ENCODE measurements at regions of chr20 and their contacts with region 1.

Region 1: DNA sequence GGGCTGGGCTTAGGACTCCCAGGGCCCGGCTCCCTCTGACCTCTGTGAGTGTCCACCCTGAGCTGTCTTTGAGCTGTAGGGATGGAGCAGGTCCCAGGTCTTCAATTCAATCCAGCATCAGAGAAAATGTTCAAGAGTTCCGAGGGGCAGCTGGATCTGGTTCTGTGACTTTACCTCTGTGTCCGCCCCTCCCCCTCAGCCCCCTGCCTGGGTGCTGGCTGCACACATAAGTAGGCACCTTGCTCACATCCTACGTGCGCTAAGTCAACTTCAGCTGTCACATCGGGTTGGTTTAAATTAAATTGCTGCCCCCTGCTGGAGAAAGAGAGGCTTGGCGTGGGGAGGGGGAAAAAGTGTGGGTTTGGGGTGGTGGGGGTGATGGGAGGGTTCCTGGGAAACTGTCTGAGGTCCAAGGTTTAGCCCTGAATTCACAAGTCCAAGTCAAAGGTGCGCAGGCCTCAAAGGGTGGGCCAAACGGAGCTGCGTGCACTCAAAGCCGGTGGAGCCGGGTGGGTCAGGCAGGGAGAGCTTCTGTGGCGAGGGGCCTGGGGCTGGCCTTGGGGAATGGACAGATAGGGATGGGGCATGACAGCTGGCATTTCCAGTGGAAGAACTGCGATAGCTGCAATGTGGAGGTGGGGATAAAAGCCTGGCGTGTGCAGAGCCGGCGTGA is 3.0 kb downstream of the WFDC5 start:
- DNase-seq: no peak
- H3K4me3 ChIP-seq: no peak overlapping the region
- CTCF ChIP-seq: peak; percentile 27

Region 2: DNA sequence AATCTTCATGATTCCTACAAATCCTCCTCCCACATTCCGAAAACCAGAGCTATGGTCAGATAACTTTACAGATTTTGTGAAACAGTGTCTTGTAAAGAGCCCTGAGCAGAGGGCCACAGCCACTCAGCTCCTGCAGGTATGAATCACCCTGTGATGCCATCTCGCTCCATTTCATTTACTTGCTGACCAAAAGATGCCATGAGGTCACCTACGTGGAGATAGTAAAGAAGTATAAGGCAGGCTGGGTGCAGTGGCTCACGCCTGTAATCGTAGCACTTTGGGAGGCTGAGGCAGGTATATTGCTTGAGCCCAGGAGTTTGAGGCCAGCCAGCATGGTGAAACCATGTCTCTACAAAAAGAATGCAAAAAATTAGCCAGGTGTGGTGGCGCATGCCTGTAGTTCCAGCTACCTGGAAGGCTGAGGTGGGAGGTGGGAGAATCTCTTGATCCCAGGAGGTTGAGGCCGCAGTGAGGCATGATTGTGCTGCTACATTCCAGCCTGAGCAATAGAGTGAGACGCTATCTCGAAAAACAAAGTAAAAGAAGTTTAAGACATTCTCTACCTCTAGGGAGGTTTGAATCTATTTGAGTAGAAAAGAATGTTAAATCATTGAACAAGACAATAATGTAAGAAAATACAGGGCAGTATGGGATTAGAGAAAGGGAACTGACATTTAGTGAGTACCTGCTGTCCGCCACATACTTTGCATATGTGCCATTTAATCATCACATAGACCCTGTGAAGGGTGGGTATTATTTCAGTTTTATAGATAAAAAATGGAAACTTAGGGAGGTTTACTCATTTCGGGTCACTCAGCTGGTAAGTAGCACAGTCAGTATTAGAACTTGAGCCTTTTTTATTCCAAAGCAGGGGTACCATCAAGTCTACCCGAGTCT is 114.5 kb before region 1 on chr20:
- CTCF ChIA-PET with region 1: no interaction called
- POLR2A ChIA-PET with region 1: no interaction called
- DNase-seq: no peak
- H3K4me3 ChIP-seq: no peak overlapping the region
- CTCF ChIP-seq: no peak

Region 3: DNA sequence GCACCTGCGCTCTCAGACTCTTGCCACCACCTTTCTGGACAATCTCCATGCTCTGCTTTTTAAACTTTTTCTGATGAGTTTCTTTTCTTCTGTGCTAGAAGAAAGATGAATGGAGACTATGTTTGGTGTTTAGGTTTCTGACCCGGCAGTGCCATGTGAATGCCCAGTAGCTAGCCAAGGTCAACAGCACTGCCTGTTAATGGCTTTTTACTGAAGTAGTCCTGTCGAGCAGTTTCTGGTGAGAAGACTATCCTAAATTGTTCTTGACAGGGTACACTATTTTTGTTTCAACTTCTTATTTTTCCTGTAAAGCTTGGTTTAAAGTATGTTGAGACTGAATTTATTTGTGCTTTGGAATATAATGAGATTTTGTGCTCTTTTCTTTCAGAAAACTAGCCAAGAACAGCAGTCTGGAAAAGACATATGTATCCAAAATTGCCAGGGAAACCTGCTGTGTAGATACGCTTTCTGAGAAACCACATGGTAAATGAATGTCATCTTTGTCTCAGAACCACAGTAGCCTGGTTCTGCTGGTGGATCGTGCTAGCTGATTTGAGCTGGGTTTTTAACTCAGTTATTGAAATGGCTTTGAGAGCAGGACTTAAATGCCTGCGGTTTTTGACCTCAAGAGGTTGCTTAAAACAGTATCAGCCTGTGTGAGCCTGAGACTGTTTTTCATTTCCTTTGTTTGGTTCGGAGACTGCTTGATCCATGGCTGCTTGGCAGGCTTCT is 59.1 kb before region 1 on chr20:
- CTCF ChIA-PET with region 1: interaction called, 16 read pairs
- POLR2A ChIA-PET with region 1: no interaction called
- DNase-seq: peak; percentile 57
- H3K4me3 ChIP-seq: no peak overlapping the region
- CTCF ChIP-seq: no peak

Region 4: GRCh38 chr20:45329510-45330319 is 217.8 kb after region 1 on chr20:
- CTCF ChIA-PET with region 1: no interaction called
- POLR2A ChIA-PET with region 1: no interaction called
- DNase-seq: no peak
- H3K4me3 ChIP-seq: no peak overlapping the region
- CTCF ChIP-seq: no peak

Region 5: DNA sequence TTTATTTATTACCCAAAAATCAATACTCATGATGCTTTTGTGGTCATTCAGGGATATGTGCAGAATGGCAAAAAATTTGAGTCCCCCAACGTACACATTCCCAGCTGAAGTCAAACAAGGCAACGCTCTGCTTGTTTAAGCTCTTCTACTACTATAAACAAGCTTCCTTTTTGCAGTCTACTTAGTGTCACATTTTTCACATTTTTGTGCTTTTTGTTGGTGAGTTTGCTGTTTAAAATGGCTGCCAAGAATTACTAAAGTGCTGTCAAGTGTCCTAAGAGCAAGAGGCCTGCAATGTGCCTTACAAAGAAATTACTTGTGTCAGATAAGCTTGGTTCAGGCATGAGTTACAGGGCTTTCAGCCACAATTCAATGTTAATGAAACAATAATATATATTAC is 465.1 kb after region 1 on chr20:
- CTCF ChIA-PET with region 1: no interaction called
- POLR2A ChIA-PET with region 1: no interaction called
- DNase-seq: peak; percentile 37
- H3K4me3 ChIP-seq: no peak overlapping the region
- CTCF ChIP-seq: no peak

Measured in AG04449 (cell line).